WTC11 (cell line): ENCODE measurements at regions of chr4 and their contacts with region 1.

Region 1: GRCh38 chr4:150960818-150961217 is 54.3 kb downstream of the LRBA start:
- DNase-seq: peak; percentile 69
- ATAC-seq: peak; percentile 98
- H3K4me3 Mint-ChIP-seq: no peak overlapping the region
- H3K27ac Mint-ChIP-seq: peak overlapping the region; percentile 7; the same call in 1 of the 2 replicates
- H3K4me1 Mint-ChIP-seq: peaks cover 4% of the 10 kb centered on the region
- H3K27me3 Mint-ChIP-seq: peaks cover 7% of the 10 kb centered on the region
- CTCF ChIP-seq: peak; percentile 63

Region 2: DNA sequence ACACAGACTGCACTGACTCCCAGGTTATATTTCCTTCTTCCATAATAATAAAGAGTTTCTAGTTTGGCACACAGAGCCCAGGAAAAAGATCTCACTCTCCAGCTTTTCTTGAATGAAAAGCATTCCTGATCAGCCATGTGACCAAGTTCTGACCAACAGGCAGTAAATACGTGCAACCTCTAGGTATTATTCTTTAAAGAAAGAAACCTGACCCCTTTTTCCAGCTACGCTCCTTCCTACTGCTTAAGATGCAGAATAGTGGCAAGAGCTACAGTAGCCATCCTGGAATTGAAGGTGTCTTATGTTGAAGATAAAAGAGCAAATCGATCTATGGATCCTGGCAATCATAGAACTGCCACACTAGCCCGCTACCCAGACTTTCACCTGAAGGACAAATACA is 22.4 kb before region 1 on chr4:
- CTCF ChIA-PET with region 1: interaction called, 20 read pairs
- POLR2A ChIA-PET with region 1: no interaction called
- DNase-seq: no peak
- ATAC-seq: peak; percentile 100
- H3K4me3 Mint-ChIP-seq: peak overlapping the region; percentile 34
- H3K27ac Mint-ChIP-seq: peak overlapping the region; percentile 96
- H3K4me1 Mint-ChIP-seq: peaks cover 23% of the 10 kb centered on the region
- H3K27me3 Mint-ChIP-seq: no peaks in the 10 kb centered on the region
- CTCF ChIP-seq: no peak

Region 3: GRCh38 chr4:150976478-150977118 is 15.8 kb after region 1 on chr4:
- CTCF ChIA-PET with region 1: interaction called, 14 read pairs
- POLR2A ChIA-PET with region 1: no interaction called
- DNase-seq: no peak
- ATAC-seq: peak; percentile 96
- H3K4me3 Mint-ChIP-seq: no peak overlapping the region
- H3K27ac Mint-ChIP-seq: no peak overlapping the region; the same call in 1 of the 2 replicates
- H3K4me1 Mint-ChIP-seq: peaks cover 27% of the 10 kb centered on the region
- H3K27me3 Mint-ChIP-seq: no peaks in the 10 kb centered on the region
- CTCF ChIP-seq: no peak

Region 4: DNA sequence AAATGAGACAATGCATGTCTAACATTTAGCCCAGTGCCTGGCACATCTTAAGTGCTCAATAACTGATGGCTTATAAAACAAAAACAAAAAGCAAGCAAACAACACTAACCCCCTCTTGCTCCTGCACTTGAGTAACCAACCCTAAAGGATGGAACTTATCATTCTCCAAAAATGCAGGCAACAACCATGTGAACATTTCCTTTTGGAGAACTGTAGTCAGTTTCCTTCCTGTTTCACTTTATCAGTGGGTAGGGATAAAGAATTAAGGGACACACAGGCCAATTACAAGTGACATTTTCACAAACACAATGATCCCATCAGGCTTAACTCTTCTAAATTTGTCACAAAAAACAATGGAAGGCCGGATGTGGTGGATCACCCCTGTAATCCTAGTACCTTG is 169.0 kb after region 1 on chr4:
- CTCF ChIA-PET with region 1: no interaction called
- POLR2A ChIA-PET with region 1: no interaction called
- DNase-seq: no peak
- ATAC-seq: no peak
- H3K4me3 Mint-ChIP-seq: no peak overlapping the region
- H3K27ac Mint-ChIP-seq: no peak overlapping the region
- H3K4me1 Mint-ChIP-seq: peaks cover 3% of the 10 kb centered on the region; the same call in 1 of the 2 replicates
- H3K27me3 Mint-ChIP-seq: no peaks in the 10 kb centered on the region
- CTCF ChIP-seq: no peak